Transverse colon (tissue), 4 donors: ENCODE measurements at regions of chr6 and their contacts with region 1.

Region 1: GRCh38 chr6:164882236-164882635 is 427.2 kb downstream of the C6orf118 start:
- DNase-seq: no peak
- H3K4me3 ChIP-seq: no peak overlapping the region
- H3K27ac ChIP-seq: no peak overlapping the region
- H3K4me1 ChIP-seq: no peaks in the 10 kb centered on the region
- H3K27me3 ChIP-seq: no peaks in the 10 kb centered on the region
- CTCF ChIP-seq: no peak
- EP300 ChIP-seq: no peak
- POLR2A ChIP-seq: no peak

Region 2: DNA sequence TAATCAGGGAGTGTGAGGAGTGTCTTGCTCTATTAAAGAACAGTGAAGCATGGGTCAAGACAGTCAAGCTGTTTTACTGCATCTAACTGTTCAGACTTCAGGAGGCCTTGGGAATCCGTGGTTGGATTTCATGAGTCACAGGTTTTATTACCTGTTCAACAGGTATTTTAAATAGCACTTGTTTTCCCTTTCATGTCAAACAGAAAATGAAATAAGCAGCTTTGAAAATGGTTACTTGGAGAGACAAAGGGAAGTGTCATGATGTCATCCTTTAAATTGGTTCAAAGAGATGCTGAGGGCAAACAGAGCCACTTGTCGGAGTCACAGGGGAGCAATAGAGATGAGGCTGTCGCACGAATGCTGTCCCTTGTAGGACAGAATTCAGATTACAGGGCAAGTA is 846.2 kb before region 1 on chr6:
- in situ Hi-C with region 1: no loop called
- intact Hi-C with region 1: no loop called
- DNase-seq: no peak
- H3K4me3 ChIP-seq: no peak overlapping the region
- H3K27ac ChIP-seq: no peak overlapping the region
- H3K4me1 ChIP-seq: no peaks in the 10 kb centered on the region
- H3K27me3 ChIP-seq: no peaks in the 10 kb centered on the region
- CTCF ChIP-seq: no peak
- EP300 ChIP-seq: no peak
- POLR2A ChIP-seq: no peak

Region 3: DNA sequence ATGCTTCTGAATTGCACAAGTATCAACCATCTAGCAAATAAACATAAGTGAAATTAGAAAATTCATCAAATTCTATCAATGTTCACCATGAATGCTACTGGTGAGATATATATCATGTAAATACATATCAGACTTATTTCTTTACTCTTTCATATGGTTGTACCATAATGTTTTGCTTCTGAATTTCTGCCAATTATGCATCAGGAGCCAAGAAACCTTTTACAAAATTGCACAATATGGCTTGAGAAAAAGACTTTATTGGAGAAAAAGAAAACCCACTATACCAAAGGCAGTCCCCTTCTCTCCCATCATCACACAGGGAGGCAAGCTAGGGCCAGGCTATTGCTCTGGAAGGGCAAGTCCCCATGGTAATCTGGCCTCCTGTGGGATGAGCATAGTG is 24.5 kb after region 1 on chr6:
- in situ Hi-C with region 1: no loop called
- intact Hi-C with region 1: loop called (anchors 1 kb)
- DNase-seq: no peak
- H3K4me3 ChIP-seq: no peak overlapping the region
- H3K27ac ChIP-seq: no peak overlapping the region
- H3K4me1 ChIP-seq: no peaks in the 10 kb centered on the region
- H3K27me3 ChIP-seq: no peaks in the 10 kb centered on the region
- CTCF ChIP-seq: no peak
- EP300 ChIP-seq: no peak
- POLR2A ChIP-seq: no peak